Activated CD8-positive, alpha-beta T cell treated with anti-CD3 and anti-CD28 coated beads, Interleukin-2, amount 10 ng/mL, durations not matched to agents 7 days and 5 days (primary cell): ENCODE measurements at regions of chr10 and their contacts with region 1.

Region 1: DNA sequence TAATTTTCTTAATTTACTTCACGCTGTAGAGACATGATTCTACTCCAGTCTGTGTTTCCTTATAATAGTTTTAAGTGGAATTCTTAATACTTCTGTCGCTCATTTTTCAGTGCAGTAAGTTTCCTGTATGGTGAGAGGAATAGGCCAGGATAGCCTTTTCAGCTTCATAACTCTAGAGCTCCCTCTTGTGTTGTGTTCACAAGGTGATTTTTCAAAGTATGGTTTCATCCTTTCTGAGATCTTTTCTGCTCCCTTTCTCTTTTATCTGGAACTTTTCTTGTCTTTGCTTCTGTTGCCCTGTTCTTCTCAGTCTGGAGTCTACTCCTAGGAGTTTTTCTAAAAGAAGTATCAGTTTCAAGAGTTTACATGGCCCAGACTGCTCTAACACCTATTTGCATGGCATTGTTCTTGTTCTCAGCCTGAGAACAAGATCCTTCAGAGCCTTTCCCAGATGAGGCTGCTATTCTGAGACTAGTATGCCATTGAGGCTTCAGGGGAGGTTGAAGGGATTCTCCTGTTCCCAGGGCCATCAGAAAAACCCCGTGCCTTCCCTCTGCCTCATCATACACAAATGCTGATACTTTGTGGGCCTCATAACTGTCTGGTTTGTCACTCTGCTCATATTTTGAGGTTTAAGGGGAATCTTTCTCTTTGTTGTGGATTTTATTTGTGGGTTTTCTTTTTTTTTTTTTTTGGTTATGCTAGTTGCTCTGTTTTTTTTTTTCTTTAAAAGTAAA is 21.8 kb downstream of the NET1 start:
- DNase-seq: no peak
- ATAC-seq: peak; percentile 78
- H3K4me3 Mint-ChIP-seq: peak overlapping the region; percentile 8
- H3K27ac Mint-ChIP-seq: peak overlapping the region; percentile 57
- H3K4me1 Mint-ChIP-seq: peaks cover 13% of the 10 kb centered on the region
- H3K27me3 Mint-ChIP-seq: no peaks in the 10 kb centered on the region

Region 2: DNA sequence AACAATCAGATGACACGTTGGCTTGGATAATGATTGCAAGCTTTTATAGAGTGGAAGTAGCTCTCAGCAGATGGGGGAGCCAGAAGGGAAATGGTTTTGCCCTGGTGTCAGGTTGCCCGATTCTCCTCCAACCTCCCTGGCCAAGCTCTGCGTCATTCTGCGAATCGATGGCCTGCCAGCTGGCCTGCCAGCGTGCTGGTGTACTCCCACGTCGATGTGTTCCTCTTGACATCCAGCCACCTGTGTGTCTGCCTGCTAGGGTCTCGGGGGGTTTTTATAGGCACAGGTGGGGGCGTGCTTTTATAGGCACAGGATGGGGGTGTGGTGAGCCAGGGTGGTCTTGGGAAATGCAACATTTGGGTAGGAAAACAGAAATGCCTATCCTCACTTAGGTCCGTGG is 17.2 kb before region 1 on chr10:
- CTCF ChIA-PET with region 1: interaction called, 10 read pairs
- POLR2A ChIA-PET with region 1: no interaction called
- DNase-seq: no peak
- ATAC-seq: no peak
- H3K4me3 Mint-ChIP-seq: no peak overlapping the region
- H3K27ac Mint-ChIP-seq: no peak overlapping the region
- H3K4me1 Mint-ChIP-seq: peaks cover 7% of the 10 kb centered on the region
- H3K27me3 Mint-ChIP-seq: no peaks in the 10 kb centered on the region

Region 3: DNA sequence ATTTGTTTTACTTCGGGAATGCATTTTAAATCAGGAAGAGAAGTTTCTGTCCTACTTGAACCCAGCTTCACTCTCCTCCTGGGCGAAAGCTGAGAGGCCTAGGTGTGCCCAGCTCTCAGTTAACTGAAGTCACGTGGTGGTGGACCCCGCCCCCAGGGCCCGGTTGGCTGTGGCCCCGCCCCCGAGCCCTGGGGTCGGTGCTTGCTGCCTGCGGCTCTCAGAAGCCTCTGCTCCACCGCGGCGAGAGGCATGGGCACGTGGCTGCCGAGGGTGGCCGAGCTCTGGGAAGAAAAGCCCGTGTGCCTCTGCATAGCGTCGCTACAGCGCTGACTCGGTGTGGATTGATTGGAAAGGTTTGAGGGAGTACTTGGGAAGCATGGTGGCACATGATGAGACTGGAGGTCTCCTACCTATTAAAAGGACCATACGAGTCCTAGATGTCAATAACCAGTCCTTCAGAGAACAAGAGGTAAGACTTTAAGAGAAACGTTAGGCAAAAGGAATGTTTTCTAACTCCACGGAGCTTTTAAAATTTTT is 12.3 kb after region 1 on chr10:
- CTCF ChIA-PET with region 1: interaction called, 39 read pairs
- POLR2A ChIA-PET with region 1: no interaction called
- DNase-seq: peak; percentile 80
- ATAC-seq: peak; percentile 72
- H3K4me3 Mint-ChIP-seq: peak overlapping the region; percentile 68
- H3K27ac Mint-ChIP-seq: peak overlapping the region; percentile 62
- H3K4me1 Mint-ChIP-seq: peaks cover 55% of the 10 kb centered on the region
- H3K27me3 Mint-ChIP-seq: no peaks in the 10 kb centered on the region

Region 4: GRCh38 chr10:5453749-5454489 is 19.7 kb after region 1 on chr10:
- CTCF ChIA-PET with region 1: interaction called, 16 read pairs
- POLR2A ChIA-PET with region 1: no interaction called
- DNase-seq: no peak
- ATAC-seq: no peak
- H3K4me3 Mint-ChIP-seq: no peak overlapping the region
- H3K27ac Mint-ChIP-seq: no peak overlapping the region
- H3K4me1 Mint-ChIP-seq: peaks cover 17% of the 10 kb centered on the region
- H3K27me3 Mint-ChIP-seq: no peaks in the 10 kb centered on the region

Region 5: DNA sequence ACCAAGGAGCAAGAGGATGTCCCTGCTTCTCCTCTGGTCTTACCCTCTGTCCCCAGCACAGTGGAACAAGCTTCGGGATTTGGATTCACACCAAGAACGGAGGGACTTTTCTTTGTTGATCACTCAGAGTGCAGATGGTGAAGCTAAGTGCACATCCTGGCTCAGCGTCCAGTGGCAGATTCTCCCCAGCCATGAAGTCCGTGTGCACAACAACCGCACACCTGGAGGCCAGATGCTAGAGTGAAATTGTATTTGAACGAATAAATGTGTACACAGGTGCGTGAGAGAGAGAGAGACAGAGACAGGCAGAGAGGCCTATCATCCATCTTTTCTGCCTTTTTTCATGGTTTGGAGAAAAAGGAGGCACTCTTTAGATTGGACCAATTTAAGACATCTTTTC is 200.7 kb after region 1 on chr10:
- CTCF ChIA-PET with region 1: no interaction called
- POLR2A ChIA-PET with region 1: no interaction called
- DNase-seq: no peak
- ATAC-seq: no peak
- H3K4me3 Mint-ChIP-seq: no peak overlapping the region
- H3K27ac Mint-ChIP-seq: no peak overlapping the region
- H3K4me1 Mint-ChIP-seq: peaks cover 3% of the 10 kb centered on the region
- H3K27me3 Mint-ChIP-seq: peaks cover 8% of the 10 kb centered on the region